Aorta (tissue), 5 donors: ENCODE measurements at regions of chr11 and their contacts with region 1.

Region 1: DNA sequence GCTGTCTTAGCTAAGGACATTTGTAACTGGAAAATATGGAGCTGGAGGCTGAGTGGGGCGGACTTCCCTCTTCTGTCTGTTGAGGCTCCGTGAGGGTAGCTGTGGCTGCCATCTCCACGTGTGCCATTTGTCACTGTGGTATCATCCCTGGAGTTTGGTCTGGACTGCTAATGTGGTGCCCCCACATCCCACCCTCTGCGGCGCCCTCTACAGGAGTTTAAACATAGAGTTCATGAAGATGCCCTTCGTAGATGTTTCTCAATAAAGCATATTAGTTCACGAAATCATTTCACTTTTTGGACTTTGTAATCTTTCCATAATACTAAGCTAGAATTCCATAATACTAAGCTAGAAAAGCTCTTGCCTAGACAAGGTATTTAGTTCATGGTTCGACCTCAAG is 52.4 kb downstream of the TECTA start:
- DNase-seq: no peak
- ATAC-seq: no peak
- H3K4me3 ChIP-seq: no peak overlapping the region
- H3K27ac ChIP-seq: no peak overlapping the region
- H3K4me1 ChIP-seq: no peaks in the 10 kb centered on the region
- H3K27me3 ChIP-seq: no peaks in the 10 kb centered on the region

Region 2: GRCh38 chr11:120738516-120739046 is 414.9 kb before region 1 on chr11:
- intact Hi-C with region 1: loop called in 1 of 2 experiments (anchors 10 kb)
- DNase-seq: no peak
- ATAC-seq: no peak
- H3K4me3 ChIP-seq: no peak overlapping the region
- H3K27ac ChIP-seq: no peak overlapping the region
- H3K4me1 ChIP-seq: no peaks in the 10 kb centered on the region
- H3K27me3 ChIP-seq: no peaks in the 10 kb centered on the region

Region 3: GRCh38 chr11:121207485-121208115 is 54.1 kb after region 1 on chr11:
- intact Hi-C with region 1: no loop called
- DNase-seq: no peak
- ATAC-seq: no peak
- H3K4me3 ChIP-seq: no peak overlapping the region
- H3K27ac ChIP-seq: no peak overlapping the region
- H3K4me1 ChIP-seq: no peaks in the 10 kb centered on the region
- H3K27me3 ChIP-seq: no peaks in the 10 kb centered on the region